Posterior cingulate gyrus (tissue), 11 donors: ENCODE measurements at regions of chr6 and their contacts with region 1.

Region 1: DNA sequence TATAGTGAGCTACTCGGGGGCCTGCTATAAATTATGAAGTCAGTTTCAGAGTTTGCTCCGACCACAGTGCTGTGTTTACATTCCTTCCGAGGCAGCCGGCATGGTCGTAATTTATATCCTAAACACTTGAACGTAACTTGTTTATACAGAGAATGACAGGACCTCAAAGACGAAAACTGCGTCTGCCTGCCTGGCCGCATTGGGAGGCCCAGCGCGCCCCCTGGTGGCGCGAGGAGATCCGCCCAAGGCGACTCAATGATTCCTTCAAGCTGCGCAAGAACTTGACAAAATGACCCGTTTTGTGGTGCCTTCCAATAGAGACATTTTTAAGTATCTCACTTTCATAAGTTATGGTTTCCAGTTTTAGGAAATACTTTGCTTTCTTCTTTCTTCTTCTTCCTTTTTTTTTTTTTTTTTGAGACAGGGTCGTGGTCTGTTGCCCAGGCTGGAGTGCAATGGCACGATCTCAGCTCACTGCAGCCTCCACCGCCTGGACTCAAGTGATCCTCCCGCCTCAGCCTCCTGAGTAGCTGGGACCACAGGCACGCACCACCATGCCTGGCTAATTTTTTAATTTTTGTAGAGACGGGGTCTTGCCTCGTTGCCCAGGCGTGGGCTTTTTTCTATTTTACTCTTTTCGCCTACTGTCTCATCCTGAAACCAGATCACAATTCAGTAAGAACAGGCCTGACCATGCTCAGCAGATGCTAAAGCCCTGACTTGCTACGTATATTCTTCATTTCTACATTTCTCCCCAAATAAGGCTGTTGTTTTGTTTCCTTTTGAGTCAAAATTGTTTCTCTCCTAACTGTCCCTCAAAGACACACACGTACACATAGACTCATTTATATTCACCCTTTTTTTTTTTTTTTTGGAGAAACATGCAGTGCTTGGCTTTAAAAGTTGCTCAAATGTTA is 7.8 kb downstream of the FOXF2 start:
- DNase-seq: peak in 7 of 10 donors; percentile 56 to 95 (median 66)

Region 2: DNA sequence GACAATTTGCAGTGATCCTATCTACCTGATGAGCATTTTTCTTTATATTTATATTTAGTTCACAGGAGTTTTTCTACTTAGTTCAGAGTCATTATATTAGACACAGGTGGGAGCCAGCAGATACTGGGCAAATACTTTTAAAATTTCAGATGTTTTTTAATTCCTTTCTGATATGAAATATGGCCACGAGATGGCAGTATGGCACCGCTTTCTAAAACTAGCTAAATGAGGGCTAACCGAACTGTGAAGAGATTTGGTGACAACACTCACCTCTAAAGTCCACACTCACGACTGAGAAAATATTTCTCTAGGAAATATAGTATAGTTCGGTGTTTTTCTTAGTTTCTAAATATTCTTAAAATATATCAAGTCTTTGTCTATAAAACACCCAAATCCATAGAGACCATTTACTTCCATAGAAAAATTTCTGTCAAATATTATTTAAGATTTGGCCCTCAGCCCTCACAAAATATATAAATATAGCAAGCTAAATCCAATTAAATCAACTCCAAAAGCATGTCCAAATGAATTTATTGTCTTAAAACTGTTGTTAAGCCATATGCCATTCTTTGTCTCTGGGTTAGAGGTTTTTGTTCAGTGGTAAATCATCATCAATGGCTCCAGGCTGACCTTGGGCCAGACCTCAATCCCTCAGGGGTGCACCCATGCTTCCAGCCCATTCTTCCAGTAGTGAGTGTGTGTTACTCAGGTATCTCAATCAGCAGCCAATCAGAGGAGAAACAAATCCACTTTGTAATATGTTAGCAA is 803.9 kb before region 1 on chr6:
- intact Hi-C with region 1: loop called (anchors 5 kb)
- DNase-seq: peak in 4 of 10 donors; percentile 27 to 55 (median 40)

Region 3: DNA sequence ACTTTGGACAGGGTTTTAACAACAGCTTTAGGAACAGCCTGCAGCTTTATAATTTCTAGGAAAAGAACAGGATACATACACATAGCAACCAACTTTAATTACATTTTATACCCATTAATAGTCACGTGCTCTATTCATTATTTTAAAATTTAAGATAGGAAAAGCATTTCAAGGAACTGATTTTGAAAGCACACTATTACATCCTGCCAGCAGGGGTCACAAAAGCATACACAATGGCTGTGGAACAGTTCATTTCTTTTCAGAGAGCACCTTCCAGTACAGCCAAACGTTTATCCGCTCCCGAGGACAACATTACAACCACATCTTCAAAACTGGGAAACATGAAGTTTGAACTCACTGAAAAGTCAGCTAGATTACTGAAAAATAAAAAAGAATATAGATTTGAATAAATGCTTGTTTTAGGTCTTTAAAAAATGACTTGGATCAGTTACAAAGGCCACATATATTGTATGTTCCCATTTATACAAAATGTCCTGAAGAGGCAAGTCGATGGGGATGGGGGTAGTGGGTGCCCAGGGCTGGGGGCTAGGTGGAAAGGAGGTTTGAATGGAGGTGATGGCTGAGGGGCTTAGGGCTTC is 599.6 kb before region 1 on chr6:
- intact Hi-C with region 1: loop called (anchors 2 kb)
- DNase-seq: peak in 3 of 10 donors; percentile 23 to 39 (median 25)

Region 4: GRCh38 chr6:1787894-1788293 is 390.7 kb after region 1 on chr6:
- intact Hi-C with region 1: no loop called
- DNase-seq: peak in 1 of 10 donors; percentile 66